Ovary (tissue), 10 donors: ENCODE measurements at regions of chr19 and their contacts with region 1.

Region 1: DNA sequence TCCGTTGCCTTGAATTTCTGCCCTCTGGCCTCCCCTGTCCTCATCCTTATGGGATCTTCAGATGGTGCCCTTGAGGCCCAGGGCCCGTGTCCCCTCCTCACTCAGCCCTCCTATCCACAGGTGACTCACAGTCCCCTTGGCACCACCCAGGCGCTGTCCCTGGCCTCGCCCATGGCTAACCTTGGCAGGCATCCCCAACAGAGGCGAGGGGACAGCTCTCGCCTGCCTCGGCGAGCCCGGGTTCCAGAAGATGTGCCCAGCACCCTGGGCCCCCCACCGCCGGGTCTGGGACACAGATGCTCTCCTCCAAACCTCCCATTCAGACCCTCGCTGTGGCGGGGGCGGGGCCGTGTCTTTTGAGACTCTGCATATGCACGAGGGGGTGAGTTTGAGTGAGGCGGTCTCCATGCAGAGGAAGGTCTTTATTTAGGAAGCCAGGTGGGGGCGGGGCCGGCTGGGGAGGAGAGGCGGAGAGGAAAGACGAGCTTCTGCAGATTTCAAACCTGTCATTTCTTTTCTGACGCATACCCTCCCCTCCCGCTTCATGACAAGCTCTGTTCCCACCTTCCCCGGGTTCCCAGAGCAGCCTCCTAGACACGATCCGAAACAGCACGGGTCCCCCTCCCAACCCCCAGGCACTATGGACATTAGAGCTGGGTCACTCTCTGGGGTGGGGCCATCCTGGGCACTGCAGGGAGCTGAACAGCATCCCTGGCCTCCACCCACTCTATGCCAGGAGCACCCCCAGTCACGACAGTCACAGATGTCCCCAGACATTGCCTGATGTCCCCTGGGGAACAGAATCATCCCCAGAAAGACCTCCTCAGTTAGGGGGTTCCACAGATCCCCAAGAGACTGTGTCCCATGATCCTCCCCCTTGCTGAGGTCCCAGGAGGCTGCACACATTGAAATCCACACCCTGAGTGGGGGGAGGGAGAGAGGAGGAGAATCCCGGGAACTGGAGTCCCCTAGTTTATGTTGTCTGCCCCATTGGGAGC is 48.5 kb downstream of the GNG7 start:
- DNase-seq: no peak
- H3K4me3 ChIP-seq: no peak overlapping the region
- H3K27ac ChIP-seq: peak overlapping the region in 1 of 2 donors; percentile 31
- H3K4me1 ChIP-seq: peaks cover 11% of the 10 kb centered on the region
- H3K27me3 ChIP-seq: no peaks in the 10 kb centered on the region
- CTCF ChIP-seq: no peak
- EP300 ChIP-seq: no peak
- POLR2A ChIP-seq: no peak

Region 2: GRCh38 chr19:2722541-2723344 is 68.7 kb after region 1 on chr19:
- intact Hi-C with region 1: loop called in 1 of 4 experiments (anchors 10 kb)
- DNase-seq: peak; percentile 81 to 88 (median 83)
- H3K4me3 ChIP-seq: no peak overlapping the region
- H3K27ac ChIP-seq: peak overlapping the region in 1 of 2 donors; percentile 53
- H3K4me1 ChIP-seq: peaks cover 14% of the 10 kb centered on the region
- H3K27me3 ChIP-seq: no peaks in the 10 kb centered on the region
- CTCF ChIP-seq: no peak
- EP300 ChIP-seq: no peak
- POLR2A ChIP-seq: no peak

Region 3: GRCh38 chr19:2750808-2751443 is 96.9 kb after region 1 on chr19:
- intact Hi-C with region 1: loop called in 3 of 4 experiments (anchors 5 kb)
- DNase-seq: no peak
- H3K4me3 ChIP-seq: no peak overlapping the region
- H3K27ac ChIP-seq: no peak overlapping the region
- H3K4me1 ChIP-seq: peaks cover 3% of the 10 kb centered on the region
- H3K27me3 ChIP-seq: no peaks in the 10 kb centered on the region
- CTCF ChIP-seq: no peak
- EP300 ChIP-seq: no peak
- POLR2A ChIP-seq: no peak

Region 4: DNA sequence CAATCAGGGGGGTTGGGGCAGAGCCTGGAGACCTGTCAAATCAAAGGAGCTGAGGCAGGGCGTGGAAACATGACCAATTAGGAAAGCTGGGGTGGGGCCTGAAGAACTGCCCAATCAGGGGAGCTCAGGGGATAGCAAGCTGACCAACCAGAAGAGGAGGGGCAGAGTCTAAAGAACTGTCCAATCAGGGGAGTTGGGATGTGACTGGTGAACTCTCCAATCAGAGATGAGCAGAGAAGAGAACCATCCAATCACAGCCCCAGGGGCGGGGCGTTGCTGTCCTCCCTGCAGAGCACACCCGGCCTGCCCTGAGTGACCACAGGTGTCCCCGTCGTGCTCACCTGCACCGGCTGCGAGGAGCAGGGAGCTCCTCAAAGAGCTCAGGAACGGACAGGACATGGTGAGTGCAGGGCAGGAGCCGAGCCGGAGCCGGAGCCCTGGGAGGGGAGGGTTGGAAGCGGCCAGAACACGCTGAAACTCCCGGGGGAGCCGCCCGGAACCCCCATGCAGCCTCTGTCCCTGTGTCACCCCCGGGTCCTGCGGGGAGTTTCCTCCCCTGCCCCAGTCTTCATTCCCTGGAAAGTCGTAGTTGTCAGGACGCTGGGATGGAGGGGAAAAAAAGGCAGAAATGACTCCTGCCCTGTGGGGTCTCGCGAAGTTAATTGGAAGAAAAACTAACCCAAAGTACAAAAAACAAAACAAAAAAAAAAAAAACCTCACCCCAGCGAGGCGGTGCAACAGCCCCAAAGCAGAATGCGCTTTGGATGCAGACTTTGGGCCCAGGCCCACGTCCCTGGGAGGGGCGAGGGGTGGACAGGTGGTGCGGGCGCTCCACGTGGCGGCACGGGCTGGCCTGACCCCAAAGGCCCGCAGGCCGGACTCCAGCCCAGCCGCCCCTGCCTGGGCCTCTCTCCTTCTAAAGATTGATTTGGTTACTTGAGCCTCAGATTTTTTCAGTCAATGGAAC is 213.3 kb after region 1 on chr19 and contains the start of gene ZNF556:
- intact Hi-C with region 1: loop called in 2 of 4 experiments (anchors 5 to 10 kb)
- DNase-seq: peak; percentile 89 to 95 (median 92)
- H3K4me3 ChIP-seq: peak within 1 kb of the TSS; percentile 43
- H3K27ac ChIP-seq: peak within 1 kb of the TSS in 1 of 2 donors; percentile 51
- H3K4me1 ChIP-seq: peaks cover 14% of the 10 kb centered on the region
- H3K27me3 ChIP-seq: no peaks in the 10 kb centered on the region
- CTCF ChIP-seq: no peak
- EP300 ChIP-seq: no peak
- POLR2A ChIP-seq: no peak
- total RNA-seq, gene ZNF556: 2.8 to 9.0 (median 6.9) TPM